ENCODE measurements at regions of chr6 and their contacts with region 1.

Region 1: DNA sequence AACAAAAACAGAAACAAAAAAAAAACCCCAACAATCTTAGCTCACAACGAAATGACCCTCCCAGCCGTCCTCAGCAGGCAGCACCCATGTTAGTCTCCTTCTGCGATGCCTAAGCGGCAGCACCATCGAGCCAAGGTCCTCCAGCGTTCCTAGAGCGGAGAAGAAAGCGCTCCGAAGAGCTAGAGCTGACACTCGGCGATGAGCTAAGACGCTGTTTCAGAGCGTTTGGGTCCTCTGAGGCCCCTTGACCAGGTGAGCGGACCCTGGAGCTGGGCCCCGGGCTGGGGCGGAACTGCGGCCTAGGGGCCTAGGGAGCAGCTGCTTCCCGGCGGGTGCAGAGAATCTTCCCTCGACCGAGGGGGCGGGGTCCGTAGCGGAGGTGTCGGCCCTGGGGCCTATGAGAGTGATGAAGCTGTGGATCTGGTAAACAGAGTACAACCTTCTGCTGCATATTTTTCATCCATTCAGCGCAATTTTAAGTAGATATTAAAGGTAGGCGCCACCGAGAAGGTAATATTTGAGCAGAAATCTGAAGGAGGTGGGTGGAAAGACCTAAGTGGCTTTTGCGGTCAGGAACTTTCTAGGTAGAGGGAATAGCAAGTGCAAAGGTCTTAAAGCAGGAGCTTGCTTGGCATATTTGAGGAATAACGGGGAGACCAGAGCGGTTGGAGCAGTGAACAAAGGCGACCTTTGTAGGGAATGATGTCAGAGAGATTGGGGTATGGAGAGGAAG is at the start of gene ZSCAN26:
- DNase-seq: peak; percentile 70
- ATAC-seq: peak; percentile 98
- H3K4me3 ChIP-seq: peak within 1 kb of the TSS; percentile 96
- H3K27ac ChIP-seq: peak within 1 kb of the TSS; percentile 84
- H3K4me1 ChIP-seq: no peaks in the 10 kb centered on the region
- H3K27me3 ChIP-seq: no peaks in the 10 kb centered on the region
- CTCF ChIP-seq: no peak
- EP300 ChIP-seq: no peak
- POLR2A ChIP-seq: peak; percentile 82
- RAD21 ChIP-seq: 0 out of 2 replicates have a peak, but pooled peaks have one; percentile 4
- polyA plus RNA-seq, gene ZSCAN26: 4.6 to 5.4 TPM

Region 2: GRCh38 chr6:27951040-27951439 is 316.1 kb before region 1 on chr6:
- CTCF ChIA-PET with region 1: no interaction called
- POLR2A ChIA-PET with region 1: no interaction called
- RAD21 ChIA-PET with region 1: no interaction called
- SMC1A ChIA-PET with region 1: no interaction called
- in situ Hi-C with region 1: no loop called
- intact Hi-C with region 1: no loop called
- DNase-seq: no peak
- ATAC-seq: no peak
- H3K4me3 ChIP-seq: no peak overlapping the region
- H3K27ac ChIP-seq: no peak overlapping the region
- H3K4me1 ChIP-seq: no peaks in the 10 kb centered on the region
- H3K27me3 ChIP-seq: no peaks in the 10 kb centered on the region
- CTCF ChIP-seq: no peak
- EP300 ChIP-seq: no peak
- POLR2A ChIP-seq: no peak
- RAD21 ChIP-seq: no peak

Region 3: GRCh38 chr6:28225056-28225834 is 41.9 kb before region 1 on chr6 and contains the start of gene ZSCAN9:
- CTCF ChIA-PET with region 1: no interaction called
- POLR2A ChIA-PET with region 1: interaction called, 4 read pairs
- RAD21 ChIA-PET with region 1: interaction called, 5 read pairs
- SMC1A ChIA-PET with region 1: interaction called, 17 read pairs
- in situ Hi-C with region 1: no loop called
- intact Hi-C with region 1: no loop called
- DNase-seq: peak; percentile 44
- ATAC-seq: peak; percentile 98
- H3K4me3 ChIP-seq: peak within 1 kb of the TSS; percentile 89
- H3K27ac ChIP-seq: peak within 1 kb of the TSS; percentile 73
- H3K4me1 ChIP-seq: no peaks in the 10 kb centered on the region
- H3K27me3 ChIP-seq: no peaks in the 10 kb centered on the region
- CTCF ChIP-seq: no peak
- EP300 ChIP-seq: peak; percentile 15 to 35; a peak in 1 of 4 replicates
- POLR2A ChIP-seq: peak; percentile 95
- RAD21 ChIP-seq: no peak
- polyA plus RNA-seq, gene ZSCAN9: 10.2 to 12.4 TPM

Region 4: GRCh38 chr6:28281288-28282064 is 14.3 kb after region 1 on chr6 and contains the start of gene PGBD1:
- CTCF ChIA-PET with region 1: interaction called, 4 read pairs
- POLR2A ChIA-PET with region 1: interaction called, 5 read pairs
- RAD21 ChIA-PET with region 1: interaction called, 8 read pairs
- SMC1A ChIA-PET with region 1: interaction called, 27 read pairs
- in situ Hi-C with region 1: no loop called
- intact Hi-C with region 1: no loop called
- DNase-seq: no peak
- ATAC-seq: peak; percentile 97
- H3K4me3 ChIP-seq: peak within 1 kb of the TSS; percentile 71
- H3K27ac ChIP-seq: no peak within 1 kb of the TSS; the same call in 1 of the 2 replicates
- H3K4me1 ChIP-seq: no peaks in the 10 kb centered on the region
- H3K27me3 ChIP-seq: no peaks in the 10 kb centered on the region
- CTCF ChIP-seq: no peak
- EP300 ChIP-seq: no peak
- POLR2A ChIP-seq: peak; percentile 72
- RAD21 ChIP-seq: 0 out of 2 replicates have a peak, but pooled peaks have one; percentile 2
- polyA plus RNA-seq, gene PGBD1: 2.0 to 2.2 TPM

Region 5: DNA sequence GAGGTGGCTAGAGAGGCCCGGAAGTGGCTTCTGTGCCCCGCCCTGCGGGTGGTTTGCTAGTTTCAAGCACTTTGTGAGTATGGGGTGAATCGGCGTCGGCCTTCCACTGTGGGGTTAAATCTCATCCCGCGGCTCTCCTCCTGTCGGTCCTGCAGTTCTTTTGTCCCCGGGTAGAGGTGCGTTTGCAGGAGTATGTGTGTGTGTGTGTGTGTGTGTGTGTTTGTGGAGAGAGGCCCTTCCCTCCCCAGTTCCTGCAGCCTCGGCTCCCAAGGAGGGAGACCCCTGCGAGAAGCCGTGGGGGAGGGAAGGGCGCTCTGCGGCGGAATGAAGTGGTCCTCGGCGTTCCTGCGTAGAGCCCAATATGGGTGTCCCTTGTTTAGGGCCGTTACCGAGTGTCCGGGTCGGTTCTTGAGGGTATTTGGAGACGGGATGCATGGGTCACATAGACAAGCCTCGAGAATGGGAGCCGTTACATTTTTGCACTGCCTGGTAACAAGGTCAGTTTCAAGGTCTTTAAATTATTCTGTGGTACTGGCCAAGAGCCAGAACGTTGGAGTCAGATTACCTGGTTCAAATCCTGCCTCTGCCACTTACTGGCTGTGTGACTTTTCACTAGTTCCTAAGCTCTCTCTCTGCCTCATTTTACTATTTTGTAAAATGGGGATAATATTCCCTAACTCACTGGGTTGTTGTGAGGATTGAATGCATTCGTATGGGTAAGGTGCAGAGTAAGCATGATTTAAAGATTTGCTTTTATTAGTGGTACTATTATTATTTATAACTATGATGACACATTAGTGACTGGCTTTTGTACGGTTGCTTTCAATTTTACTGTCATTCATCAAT is 83.0 kb after region 1 on chr6 and contains the start of gene ZKSCAN3:
- CTCF ChIA-PET with region 1: interaction called, 13 read pairs
- POLR2A ChIA-PET with region 1: no interaction called
- RAD21 ChIA-PET with region 1: interaction called, 22 read pairs
- SMC1A ChIA-PET with region 1: interaction called, 19 read pairs
- in situ Hi-C with region 1: no loop called
- intact Hi-C with region 1: loop called (anchors 5 kb)
- DNase-seq: peak; percentile 46
- ATAC-seq: peak; percentile 100
- H3K4me3 ChIP-seq: peak within 1 kb of the TSS; percentile 93
- H3K27ac ChIP-seq: peak within 1 kb of the TSS; percentile 61
- H3K4me1 ChIP-seq: no peaks in the 10 kb centered on the region
- H3K27me3 ChIP-seq: no peaks in the 10 kb centered on the region
- CTCF ChIP-seq: no peak
- EP300 ChIP-seq: no peak
- POLR2A ChIP-seq: peak; percentile 80
- RAD21 ChIP-seq: peak; percentile 33; the same call in 1 of the 2 replicates
- polyA plus RNA-seq, gene ZKSCAN3: 0.86 to 1.1 TPM